B cell (primary cell): ENCODE measurements at regions of chr3 and their contacts with region 1.

Region 1: GRCh38 chr3:56682462-56683121 is 473 bp downstream of the TASOR start:
- DNase-seq: peak; percentile 91
- ATAC-seq: peak; percentile 69
- H3K4me3 ChIP-seq: peak overlapping the region; percentile 74 to 99 (median 85)
- H3K4me3 Mint-ChIP-seq: peak overlapping the region; percentile 99
- H3K27ac ChIP-seq: peak overlapping the region; percentile 98 to 99
- H3K27ac Mint-ChIP-seq: peak overlapping the region; percentile 99
- H3K4me1 ChIP-seq: peaks cover 16 to 24% of the 10 kb centered on the region in 2 donors
- H3K4me1 Mint-ChIP-seq: peaks cover 42% of the 10 kb centered on the region
- H3K27me3 ChIP-seq: no peaks in the 10 kb centered on the region
- H3K27me3 Mint-ChIP-seq: no peaks in the 10 kb centered on the region
- CTCF ChIP-seq: no peak

Region 2: DNA sequence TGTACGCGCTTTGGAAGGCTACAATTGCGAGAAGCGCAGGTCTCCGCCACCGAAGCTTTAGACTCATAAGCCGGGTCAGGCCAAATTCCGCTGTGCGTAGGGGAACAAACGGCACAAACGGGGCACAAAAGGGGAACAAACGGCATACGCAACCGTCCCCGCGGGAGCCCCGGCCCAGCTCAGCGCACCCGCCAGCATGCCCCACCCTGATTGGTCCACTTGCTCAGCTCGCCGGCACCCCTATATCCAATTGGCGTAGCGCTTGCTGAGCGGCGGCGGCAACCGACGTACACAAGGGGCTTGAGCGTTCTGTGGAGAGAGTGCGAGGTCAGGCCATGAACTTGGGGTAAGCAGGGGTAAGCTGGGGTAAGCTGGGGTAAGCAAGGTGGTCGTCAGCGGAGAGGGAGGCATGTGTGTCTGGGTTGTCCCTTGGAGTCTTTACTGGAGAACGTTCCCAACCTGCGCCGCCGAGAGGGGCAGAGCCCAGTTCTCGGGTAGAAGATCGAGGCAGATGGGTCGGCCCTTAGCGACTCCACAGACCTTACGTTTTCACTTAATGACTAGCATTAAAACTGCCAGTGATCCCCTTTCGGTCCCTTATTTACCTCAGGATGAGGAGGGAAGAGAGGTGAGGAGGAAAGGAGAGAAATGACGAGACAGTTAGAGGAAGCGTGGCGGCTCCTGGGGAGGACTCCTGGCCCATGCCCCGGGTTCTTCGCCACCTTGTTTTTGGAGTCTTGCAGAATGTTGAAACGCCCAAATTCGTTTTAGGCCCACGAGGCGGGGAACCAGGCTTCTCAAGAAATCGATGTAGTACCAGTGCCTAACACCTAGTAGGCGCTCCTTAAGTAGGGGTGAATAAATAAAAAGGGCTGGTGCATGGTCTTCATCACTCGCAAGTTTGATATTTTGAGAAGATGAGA is 125.4 kb before region 1 on chr3 and contains the start of gene CCDC66:
- CTCF ChIA-PET with region 1: no interaction called
- POLR2A ChIA-PET with region 1: interaction called, 8 read pairs
- intact Hi-C with region 1: loop called (anchors 1 kb)
- DNase-seq: peak; percentile 94
- ATAC-seq: peak; percentile 98
- H3K4me3 ChIP-seq: peak within 1 kb of the TSS; percentile 83 to 97 (median 91)
- H3K4me3 Mint-ChIP-seq: peak within 1 kb of the TSS; percentile 99
- H3K27ac ChIP-seq: peak within 1 kb of the TSS; percentile 87 to 91
- H3K27ac Mint-ChIP-seq: peak within 1 kb of the TSS; percentile 97
- H3K4me1 ChIP-seq: peaks cover 7 to 8% of the 10 kb centered on the region in 2 donors
- H3K4me1 Mint-ChIP-seq: peaks cover 19% of the 10 kb centered on the region
- H3K27me3 ChIP-seq: no peaks in the 10 kb centered on the region
- H3K27me3 Mint-ChIP-seq: no peaks in the 10 kb centered on the region
- CTCF ChIP-seq: peak; percentile 81
- total RNA-seq, gene CCDC66: 51.7 and 53.7 TPM in 2 replicates